GM10248 (cell line): ENCODE measurements at regions of chr11 and their contacts with region 1.

Region 1: GRCh38 chr11:102614485-102614884 is 10.6 kb downstream of the MMP20 start:
- DNase-seq: no peak
- CTCF ChIP-seq: peak; percentile 37

Region 2: GRCh38 chr11:102332611-102332994 is 281.9 kb before region 1 on chr11:
- CTCF ChIA-PET with region 1: interaction called, 12 read pairs
- POLR2A ChIA-PET with region 1: no interaction called
- DNase-seq: no peak
- CTCF ChIP-seq: no peak

Region 3: GRCh38 chr11:102410382-102410784 is 204.1 kb before region 1 on chr11:
- CTCF ChIA-PET with region 1: interaction called, 16 read pairs
- POLR2A ChIA-PET with region 1: no interaction called
- DNase-seq: no peak
- CTCF ChIP-seq: no peak

Region 4: GRCh38 chr11:102513869-102514268 is 100.6 kb before region 1 on chr11:
- CTCF ChIA-PET with region 1: interaction called, 13 read pairs
- POLR2A ChIA-PET with region 1: no interaction called
- DNase-seq: no peak
- CTCF ChIP-seq: no peak

Region 5: DNA sequence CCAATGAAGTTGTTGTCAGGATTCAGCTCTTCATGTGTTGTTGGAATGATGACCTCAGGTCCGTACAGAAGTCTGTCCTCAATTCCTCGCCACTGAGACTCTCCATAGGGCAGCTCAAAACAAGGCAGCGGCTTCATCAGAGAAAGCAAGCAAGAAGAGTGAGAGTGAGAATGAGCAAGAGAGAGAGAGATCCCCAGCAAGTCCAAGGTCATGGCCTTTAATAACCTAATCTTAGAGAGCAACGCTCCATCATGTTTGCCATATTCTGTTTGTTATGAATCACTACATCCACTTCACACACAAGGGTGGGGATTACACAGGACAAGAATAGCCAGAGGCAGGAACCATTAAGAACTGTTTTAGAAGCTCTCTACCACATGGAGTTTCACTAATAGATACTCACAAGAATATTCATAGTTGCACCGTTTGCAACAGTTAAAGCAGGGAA is 60.6 kb before region 1 on chr11:
- CTCF ChIA-PET with region 1: interaction called, 65 read pairs
- POLR2A ChIA-PET with region 1: interaction called, 4 read pairs
- DNase-seq: peak; percentile 26
- CTCF ChIP-seq: no peak

Region 6: GRCh38 chr11:102640946-102641345 is 26.5 kb after region 1 on chr11:
- CTCF ChIA-PET with region 1: no interaction called
- POLR2A ChIA-PET with region 1: no interaction called
- DNase-seq: no peak
- CTCF ChIP-seq: no peak

Region 7: DNA sequence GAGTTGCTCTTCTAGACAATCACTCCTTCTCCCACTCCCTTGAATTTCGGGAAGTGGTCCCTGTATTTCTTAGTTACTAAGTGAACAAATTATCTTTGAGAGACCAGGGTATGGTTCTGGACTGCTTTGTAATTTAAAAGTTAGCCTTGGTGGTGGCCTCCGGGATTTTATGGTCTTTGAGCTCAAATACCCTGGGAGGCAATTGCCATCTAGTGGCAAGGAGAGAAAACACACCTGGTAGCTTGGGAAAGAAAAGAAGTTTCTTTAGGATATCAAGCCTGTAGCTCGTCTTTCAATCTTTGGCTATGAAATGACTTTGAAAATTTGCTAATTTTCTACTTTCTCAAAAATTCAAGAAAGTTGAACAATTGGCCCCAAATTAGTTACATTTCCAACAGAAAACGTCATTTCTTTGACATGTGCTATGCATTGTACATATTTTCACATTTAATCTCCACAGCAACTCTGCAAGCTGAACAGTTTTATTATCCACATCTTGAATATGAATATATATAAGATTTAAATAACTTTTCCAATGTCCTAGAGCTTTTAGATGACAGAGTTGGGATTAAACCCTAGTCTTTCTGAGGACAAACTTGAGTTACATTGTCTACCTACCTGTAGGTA is 52.0 kb after region 1 on chr11:
- CTCF ChIA-PET with region 1: interaction called, 22 read pairs
- POLR2A ChIA-PET with region 1: no interaction called
- DNase-seq: peak; percentile 50
- CTCF ChIP-seq: peak; percentile 85